K562 (cell line): ENCODE measurements at regions of chr10 and their contacts with region 1.

Region 1: GRCh38 chr10:91908337-91909116 is 759 bp downstream of the FGFBP3 start:
- DNase-seq: peak; percentile 65 to 89 (median 74)
- ATAC-seq: peak; percentile 98
- H3K4me3 ChIP-seq: peak overlapping the region; percentile 74
- H3K27ac ChIP-seq: peak overlapping the region; percentile 50; the same call in 1 of the 3 replicates
- H3K4me1 ChIP-seq: peaks cover 0 to 10% of the 10 kb centered on the region in 2 experiments; a peak in 2 of 5 replicates
- H3K27me3 ChIP-seq: no peaks in the 10 kb centered on the region
- CTCF ChIP-seq: peak; percentile 68 to 90 (median 69)
- EP300 ChIP-seq: no peak
- POLR2A ChIP-seq: peak; percentile 67; the same call in 1 of the 2 replicates
- RAD21 ChIP-seq: peak; percentile 25 to 62; a peak in 3 of 4 replicates

Region 2: GRCh38 chr10:90920986-90921666 is 987.4 kb before region 1 on chr10 and contains the start of gene ANKRD1:
- CTCF ChIA-PET with region 1: no interaction called
- POLR2A ChIA-PET with region 1: no interaction called
- in situ Hi-C with region 1: loop called (anchors 25 kb)
- intact Hi-C with region 1: no loop called
- DNase-seq: peak in 1 of 4 experiments; percentile 1
- ATAC-seq: no peak
- H3K4me3 ChIP-seq: no peak within 1 kb of the TSS
- H3K27ac ChIP-seq: no peak within 1 kb of the TSS
- H3K4me1 ChIP-seq: no peaks in the 10 kb centered on the region
- H3K27me3 ChIP-seq: peaks cover 0 to 2% of the 10 kb centered on the region in 2 experiments; a peak in 1 of 5 replicates
- CTCF ChIP-seq: no peak
- EP300 ChIP-seq: no peak
- POLR2A ChIP-seq: no peak
- RAD21 ChIP-seq: no peak
- polyA plus RNA-seq, gene ANKRD1: not detected

Region 3: GRCh38 chr10:91389636-91390512 is 518.7 kb before region 1 on chr10:
- CTCF ChIA-PET with region 1: no interaction called
- POLR2A ChIA-PET with region 1: no interaction called
- in situ Hi-C with region 1: no loop called
- intact Hi-C with region 1: loop called (anchors 10 kb)
- DNase-seq: peak; percentile 15 to 63 (median 24)
- ATAC-seq: peak; percentile 87
- H3K4me3 ChIP-seq: no peak overlapping the region
- H3K27ac ChIP-seq: no peak overlapping the region
- H3K4me1 ChIP-seq: no peaks in the 10 kb centered on the region
- H3K27me3 ChIP-seq: no peaks in the 10 kb centered on the region; a peak in 1 of 5 replicates
- CTCF ChIP-seq: peak in 2 of 3 experiments; percentile 27 to 52; a peak in 3 of 6 replicates
- EP300 ChIP-seq: no peak
- POLR2A ChIP-seq: no peak
- RAD21 ChIP-seq: peak; percentile 55 to 74; a peak in 3 of 4 replicates

Region 4: GRCh38 chr10:91613411-91614253 is 294.9 kb before region 1 on chr10:
- CTCF ChIA-PET with region 1: no interaction called
- POLR2A ChIA-PET with region 1: no interaction called
- in situ Hi-C with region 1: no loop called
- intact Hi-C with region 1: no loop called
- DNase-seq: peak in 2 of 4 experiments; percentile 39 to 54
- ATAC-seq: peak; percentile 8; the same call in 1 of the 3 replicates
- H3K4me3 ChIP-seq: no peak overlapping the region
- H3K27ac ChIP-seq: peak overlapping the region; percentile 67; the same call in 2 of the 3 replicates
- H3K4me1 ChIP-seq: peaks cover 10 to 45% of the 10 kb centered on the region in 2 experiments; a peak in 3 of 5 replicates
- H3K27me3 ChIP-seq: no peaks in the 10 kb centered on the region
- CTCF ChIP-seq: no peak
- EP300 ChIP-seq: no peak
- POLR2A ChIP-seq: no peak
- RAD21 ChIP-seq: no peak

Region 5: DNA sequence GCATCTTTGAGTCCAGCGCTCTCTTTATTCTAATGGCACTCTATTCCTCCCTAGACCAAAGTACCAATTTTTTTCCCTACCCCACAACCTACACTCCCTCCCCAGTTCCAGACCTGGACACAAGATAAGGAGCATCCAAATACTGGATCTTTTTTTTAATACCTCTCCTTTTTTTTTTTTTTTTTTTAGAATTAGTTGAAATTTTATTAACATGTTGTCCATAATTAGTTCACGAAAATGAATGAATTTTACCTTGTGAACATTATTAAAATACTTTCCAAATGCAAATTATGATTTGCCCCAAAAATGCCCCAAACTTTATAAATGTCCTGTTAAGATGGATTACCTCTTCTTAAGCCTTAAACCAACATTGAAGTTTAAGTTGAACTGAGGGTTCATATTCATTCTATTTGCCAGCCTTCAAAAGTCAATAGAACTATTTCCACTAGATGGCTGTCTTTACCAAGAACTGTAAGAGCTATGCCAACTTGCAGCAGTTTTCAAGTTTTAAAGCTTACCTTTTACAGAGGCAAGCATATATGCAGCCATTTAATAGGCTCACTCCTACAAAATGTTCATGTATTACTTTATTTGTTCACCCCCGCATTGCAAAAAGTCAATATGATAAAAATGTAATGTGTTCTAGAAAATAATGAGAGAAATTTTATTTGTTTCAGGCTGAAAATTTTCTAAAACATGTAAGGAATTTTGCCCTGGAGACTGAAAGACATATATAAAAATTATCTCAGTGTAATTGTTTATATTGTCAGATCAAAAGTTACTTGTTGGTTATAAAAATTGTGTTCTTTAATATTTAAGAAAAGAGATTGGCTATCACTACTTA is 150.0 kb before region 1 on chr10:
- CTCF ChIA-PET with region 1: interaction called, 7 read pairs
- POLR2A ChIA-PET with region 1: no interaction called
- in situ Hi-C with region 1: no loop called
- intact Hi-C with region 1: loop called (anchors 2 kb)
- DNase-seq: peak in 2 of 4 experiments; percentile 11 to 38
- ATAC-seq: peak; percentile 70
- H3K4me3 ChIP-seq: no peak overlapping the region
- H3K27ac ChIP-seq: no peak overlapping the region
- H3K4me1 ChIP-seq: no peaks in the 10 kb centered on the region; a peak in 1 of 5 replicates
- H3K27me3 ChIP-seq: no peaks in the 10 kb centered on the region
- CTCF ChIP-seq: peak; percentile 33 to 70 (median 41); a peak in 4 of 6 replicates
- EP300 ChIP-seq: no peak
- POLR2A ChIP-seq: no peak
- RAD21 ChIP-seq: peak; percentile 78 to 86

Region 6: DNA sequence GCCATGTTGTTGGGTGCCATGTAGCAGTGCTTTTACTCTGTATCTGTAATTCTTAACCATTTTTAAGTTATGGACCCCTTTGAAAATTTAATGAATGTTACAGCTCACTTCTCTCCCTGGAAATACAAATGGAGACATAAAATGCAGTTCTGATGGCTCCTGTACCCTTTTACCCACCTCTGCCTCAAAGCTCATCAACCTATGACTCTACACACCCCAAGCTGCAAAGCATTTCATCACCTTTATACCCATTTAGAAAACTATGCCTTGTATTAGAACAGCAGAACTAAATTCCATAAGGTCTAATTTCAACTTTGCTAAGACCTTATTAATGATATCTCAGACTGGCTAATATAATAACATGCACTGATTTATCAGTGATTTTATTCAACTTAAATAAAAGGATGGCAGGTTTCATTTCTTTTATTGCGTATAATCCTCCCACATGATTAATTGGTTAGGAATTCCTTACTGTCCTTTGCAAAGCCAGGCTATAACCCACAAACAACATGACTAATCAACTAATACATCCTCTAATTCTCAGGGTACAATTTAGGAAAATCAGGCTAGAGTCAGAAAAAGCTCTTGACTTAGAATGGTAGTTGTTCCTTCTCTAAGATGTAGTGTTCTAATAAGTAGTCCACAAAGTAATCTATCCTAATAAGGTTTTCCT is 314.2 kb after region 1 on chr10:
- CTCF ChIA-PET with region 1: no interaction called
- POLR2A ChIA-PET with region 1: no interaction called
- in situ Hi-C with region 1: no loop called
- intact Hi-C with region 1: no loop called
- DNase-seq: no peak
- ATAC-seq: no peak
- H3K4me3 ChIP-seq: no peak overlapping the region
- H3K27ac ChIP-seq: no peak overlapping the region
- H3K4me1 ChIP-seq: no peaks in the 10 kb centered on the region
- H3K27me3 ChIP-seq: no peaks in the 10 kb centered on the region
- CTCF ChIP-seq: no peak
- EP300 ChIP-seq: no peak
- POLR2A ChIP-seq: no peak
- RAD21 ChIP-seq: no peak